CD8-positive, alpha-beta memory T cell (primary cell): ENCODE measurements at regions of chr1 and their contacts with region 1.

Region 1: GRCh38 chr1:214328770-214329469 is 48.0 kb downstream of the SMYD2 start:
- DNase-seq: peak; percentile 57 to 82 (median 66)
- H3K4me3 ChIP-seq: no peak overlapping the region
- H3K4me3 Mint-ChIP-seq: peak overlapping the region in 1 of 7 donors; percentile 68
- H3K27ac ChIP-seq: no peak overlapping the region
- H3K27ac Mint-ChIP-seq: peak overlapping the region in 5 of 8 donors; percentile 38 to 89 (median 52)
- H3K4me1 ChIP-seq: no peaks in the 10 kb centered on the region
- H3K4me1 Mint-ChIP-seq: peaks cover 0 to 14% (median 5%) of the 10 kb centered on the region in 3 donors
- H3K27me3 ChIP-seq: no peaks in the 10 kb centered on the region
- H3K27me3 Mint-ChIP-seq: no peaks in the 10 kb centered on the region

Region 2: DNA sequence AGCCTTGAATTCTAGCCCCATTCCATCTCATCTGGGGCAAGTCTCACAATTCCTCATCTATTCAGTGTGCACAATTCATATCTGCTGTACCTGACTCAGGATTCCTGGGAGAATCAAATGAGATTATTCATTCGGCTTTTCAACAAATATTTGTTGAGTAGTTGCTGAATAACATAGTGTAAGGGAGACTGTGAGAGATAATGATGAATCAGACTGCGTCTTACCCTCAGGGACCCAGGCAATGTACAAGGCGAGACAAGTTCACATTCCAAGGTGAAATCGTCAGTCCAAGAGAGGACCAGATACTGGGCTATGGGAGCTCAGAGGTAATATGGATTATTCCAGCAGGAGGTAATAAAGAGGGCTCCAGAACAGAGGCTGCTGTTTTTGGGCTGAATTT is 115.8 kb before region 1 on chr1:
- CTCF ChIA-PET with region 1: interaction called, 43 read pairs
- POLR2A ChIA-PET with region 1: no interaction called
- DNase-seq: no peak
- H3K4me3 ChIP-seq: no peak overlapping the region
- H3K4me3 Mint-ChIP-seq: no peak overlapping the region
- H3K27ac ChIP-seq: no peak overlapping the region
- H3K27ac Mint-ChIP-seq: no peak overlapping the region
- H3K4me1 ChIP-seq: no peaks in the 10 kb centered on the region
- H3K4me1 Mint-ChIP-seq: peaks cover 3 to 5% (median 4%) of the 10 kb centered on the region in 3 donors
- H3K27me3 ChIP-seq: no peaks in the 10 kb centered on the region
- H3K27me3 Mint-ChIP-seq: peaks cover 8 to 37% of the 10 kb centered on the region in 2 donors

Region 3: GRCh38 chr1:214261206-214262123 is 67.5 kb before region 1 on chr1:
- CTCF ChIA-PET with region 1: interaction called, 356 read pairs
- POLR2A ChIA-PET with region 1: interaction called, 6 read pairs
- DNase-seq: peak; percentile 65 to 83 (median 71)
- H3K4me3 ChIP-seq: no peak overlapping the region
- H3K4me3 Mint-ChIP-seq: no peak overlapping the region
- H3K27ac ChIP-seq: no peak overlapping the region
- H3K27ac Mint-ChIP-seq: no peak overlapping the region
- H3K4me1 ChIP-seq: no peaks in the 10 kb centered on the region
- H3K4me1 Mint-ChIP-seq: peaks cover 0 to 6% (median 6%) of the 10 kb centered on the region in 3 donors
- H3K27me3 ChIP-seq: peaks cover 18% of the 10 kb centered on the region
- H3K27me3 Mint-ChIP-seq: peaks cover 37 to 80% of the 10 kb centered on the region in 2 donors

Region 4: GRCh38 chr1:214281021-214281719 is 47.8 kb before region 1 on chr1 and contains the start of gene SMYD2:
- CTCF ChIA-PET with region 1: interaction called, 28 read pairs
- POLR2A ChIA-PET with region 1: no interaction called
- DNase-seq: peak; percentile 58 to 79 (median 75)
- H3K4me3 ChIP-seq: peak within 1 kb of the TSS; percentile 91
- H3K4me3 Mint-ChIP-seq: peak within 1 kb of the TSS; percentile 83 to 92 (median 88)
- H3K27ac ChIP-seq: peak within 1 kb of the TSS; percentile 80
- H3K27ac Mint-ChIP-seq: peak within 1 kb of the TSS; percentile 73 to 96 (median 92)
- H3K4me1 ChIP-seq: peaks cover 22% of the 10 kb centered on the region
- H3K4me1 Mint-ChIP-seq: peaks cover 47 to 67% (median 61%) of the 10 kb centered on the region in 3 donors
- H3K27me3 ChIP-seq: no peaks in the 10 kb centered on the region
- H3K27me3 Mint-ChIP-seq: peaks cover 0 to 1% of the 10 kb centered on the region in 2 donors
- total RNA-seq, gene SMYD2: 23.2 to 25.9 TPM

Region 5: DNA sequence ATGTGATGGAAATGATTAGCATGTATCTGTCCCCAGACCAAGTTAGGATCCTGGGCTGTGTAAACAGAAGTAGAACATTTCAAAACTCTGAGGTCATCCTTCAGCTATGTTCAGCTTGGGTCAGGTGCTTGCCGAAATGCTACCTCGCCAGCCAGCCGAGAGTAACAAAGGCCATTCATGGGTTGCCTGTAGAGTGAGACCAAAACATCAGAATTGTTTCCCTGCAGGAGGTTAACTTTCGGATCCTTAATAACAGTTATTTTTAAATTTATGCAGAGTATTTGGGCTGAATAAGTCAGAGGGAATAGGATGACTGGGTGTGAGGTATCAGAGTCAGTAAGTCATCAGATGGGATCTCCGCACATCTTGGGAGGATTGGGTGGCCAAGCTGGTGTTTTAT is 12.3 kb before region 1 on chr1:
- CTCF ChIA-PET with region 1: interaction called, 80 read pairs
- POLR2A ChIA-PET with region 1: interaction called, 6 read pairs
- DNase-seq: no peak
- H3K4me3 ChIP-seq: no peak overlapping the region
- H3K4me3 Mint-ChIP-seq: no peak overlapping the region
- H3K27ac ChIP-seq: no peak overlapping the region
- H3K27ac Mint-ChIP-seq: peak overlapping the region in 3 of 8 donors; percentile 12 to 52 (median 35)
- H3K4me1 ChIP-seq: no peaks in the 10 kb centered on the region
- H3K4me1 Mint-ChIP-seq: peaks cover 4 to 5% (median 5%) of the 10 kb centered on the region in 3 donors
- H3K27me3 ChIP-seq: no peaks in the 10 kb centered on the region
- H3K27me3 Mint-ChIP-seq: no peaks in the 10 kb centered on the region